KBM-7 (cell line): ENCODE measurements at regions of chr15 and their contacts with region 1.

Region 1: DNA sequence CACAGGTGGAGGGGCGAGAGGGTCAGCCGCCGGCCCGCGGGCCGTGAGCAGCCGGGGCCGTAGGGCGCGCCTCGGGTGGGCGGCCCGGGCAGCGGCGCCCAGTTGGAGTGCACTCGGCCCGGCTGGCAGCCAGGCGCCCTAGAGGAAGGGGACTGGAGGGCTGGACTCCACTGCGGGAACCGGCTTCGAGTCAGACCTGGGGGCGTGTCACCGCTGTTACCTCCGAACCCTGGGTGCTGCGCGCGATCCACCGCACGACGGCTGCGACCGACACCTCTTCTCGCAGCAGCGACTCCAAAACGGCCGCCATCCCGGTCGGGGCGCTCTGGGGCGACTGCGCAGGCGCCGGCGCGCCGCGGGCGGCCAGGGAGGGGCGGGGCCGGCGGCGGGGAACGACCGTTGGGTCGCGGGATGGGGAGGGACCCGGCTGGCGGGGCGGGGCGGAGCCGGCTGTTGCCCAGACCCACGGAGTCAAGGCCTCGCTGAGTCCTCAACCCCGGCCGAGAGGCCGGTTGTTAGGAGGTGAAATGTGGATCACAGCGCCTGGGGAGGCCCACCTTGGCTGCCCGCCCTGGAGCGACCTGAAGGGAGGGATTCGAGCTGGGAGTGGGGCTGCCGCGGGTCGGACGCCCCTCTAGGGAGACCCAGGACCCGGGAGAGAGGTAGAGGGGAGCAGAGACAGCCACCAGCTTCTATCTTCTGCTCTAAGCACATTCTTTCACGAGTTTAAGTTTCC is at the start of gene CDAN1:
- DNase-seq: peak; percentile 77

Region 2: DNA sequence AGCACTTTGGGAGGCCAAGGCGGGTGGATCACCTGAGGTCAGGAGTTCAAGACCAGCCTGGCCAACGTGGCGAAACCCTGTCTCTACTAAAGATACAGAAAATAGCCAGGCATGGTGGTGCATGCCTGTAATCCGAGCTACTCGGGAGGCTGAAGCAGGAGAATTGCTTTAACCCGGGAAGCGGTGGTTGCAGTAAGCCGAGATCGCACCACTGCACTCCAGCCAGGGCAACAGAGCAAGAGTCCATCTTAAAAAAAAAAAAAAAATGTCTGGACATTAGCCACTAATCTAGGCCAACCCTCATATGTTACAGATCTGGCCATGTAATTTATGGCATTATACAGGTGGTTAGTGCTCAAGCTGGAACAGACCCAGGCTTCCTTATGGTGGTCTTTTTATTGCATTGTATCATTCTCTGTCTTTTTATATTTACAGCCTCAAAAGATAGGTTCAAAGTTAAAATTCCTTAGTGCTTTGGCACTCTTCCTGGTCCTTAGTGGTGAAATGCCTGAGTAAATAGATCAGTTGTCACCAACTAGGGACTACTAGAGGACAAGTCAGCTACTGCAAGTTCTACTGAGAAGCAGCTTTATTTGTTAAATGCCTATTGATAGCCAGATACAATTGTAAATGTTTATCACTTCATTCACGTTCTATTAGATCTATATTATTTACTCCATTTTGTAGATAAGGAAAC is 145.6 kb before region 1 on chr15:
- in situ Hi-C with region 1: no loop called
- DNase-seq: peak; percentile 34

Region 3: DNA sequence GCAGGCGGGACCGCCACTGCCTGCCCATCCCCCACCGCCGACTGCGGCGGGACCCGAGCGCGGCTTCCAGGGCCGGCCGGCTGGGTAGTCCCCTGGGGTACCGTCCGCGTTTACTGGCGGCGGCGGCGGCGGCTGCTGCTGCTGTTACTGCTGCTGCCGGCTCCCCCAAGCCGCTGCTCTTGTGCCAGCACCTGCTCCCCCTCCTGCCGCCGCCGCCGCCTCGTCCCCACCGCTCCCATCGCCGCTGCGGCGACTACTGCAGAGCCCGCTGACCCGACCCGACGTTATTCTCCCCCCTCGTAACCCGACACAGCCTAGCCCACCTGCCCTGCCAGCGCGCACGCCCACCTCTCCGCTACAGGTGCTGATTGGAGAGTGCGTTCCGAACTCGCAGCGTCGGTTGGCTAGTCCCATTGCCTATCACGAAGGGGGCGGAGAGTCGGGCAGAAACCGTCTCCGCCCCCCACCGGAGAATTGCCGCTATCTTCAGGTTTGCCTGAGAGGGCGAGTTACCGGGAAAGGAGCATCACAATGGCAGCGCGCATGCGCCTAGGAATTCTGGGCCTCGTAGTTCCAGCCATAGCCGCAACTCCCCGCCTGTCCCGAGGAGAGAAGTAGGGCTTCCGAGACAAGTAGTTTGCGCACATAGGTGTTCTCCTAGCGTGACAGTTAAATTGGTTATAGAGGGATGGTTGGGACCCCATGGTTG is 183.7 kb after region 1 on chr15 and contains the start of gene TTBK2:
- in situ Hi-C with region 1: loop called (anchors 25 kb)
- DNase-seq: peak; percentile 100

Region 4: DNA sequence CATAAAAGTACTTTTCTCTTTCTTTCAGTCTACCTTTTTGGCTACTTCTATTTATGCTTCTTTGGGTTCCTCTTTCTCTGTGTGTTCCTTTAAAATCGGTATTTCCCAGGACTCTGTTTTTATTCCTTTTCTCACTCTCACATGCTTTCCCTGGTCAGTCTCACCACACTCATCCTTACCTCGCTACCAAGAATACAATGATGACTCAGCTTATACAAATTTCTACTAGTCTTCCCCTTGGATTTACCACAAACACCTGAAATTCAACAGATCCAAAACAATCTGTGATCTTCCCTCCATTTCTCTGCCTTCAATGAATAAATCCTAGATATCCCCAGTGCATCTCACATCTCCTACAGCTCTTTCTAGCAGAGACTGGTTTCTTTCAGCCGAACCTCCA is 686.8 kb after region 1 on chr15:
- in situ Hi-C with region 1: no loop called
- DNase-seq: no peak